Naive thymus-derived CD8-positive, alpha-beta T cell (primary cell): ENCODE measurements at regions of chr7 and their contacts with region 1.

Region 1: DNA sequence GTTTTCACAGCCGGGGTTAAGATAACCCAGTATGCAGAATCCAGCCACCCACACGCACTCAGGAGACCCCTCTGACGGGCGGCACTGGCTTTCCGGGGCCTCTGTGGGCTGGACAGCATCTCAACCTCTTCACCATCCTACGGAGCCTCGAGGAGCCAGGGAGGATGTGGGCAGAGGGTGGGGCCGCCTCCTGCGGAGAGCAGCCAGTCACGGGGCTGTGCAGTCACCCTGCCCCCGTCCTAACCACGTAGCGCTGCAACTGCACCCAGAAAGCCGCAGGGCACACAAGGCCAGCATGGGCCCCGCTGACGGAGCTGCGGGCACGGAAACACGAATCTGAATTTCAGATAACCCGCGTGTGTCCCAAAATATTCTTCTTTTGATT is 270.3 kb downstream of the ELFN1 start:
- DNase-seq: peak; percentile 75 to 99 (median 96)
- ATAC-seq: peak; percentile 87 to 91
- H3K4me3 Mint-ChIP-seq: peak overlapping the region; percentile 84 to 98 (median 94)
- H3K27ac Mint-ChIP-seq: peak overlapping the region; percentile 83 to 100 (median 98)
- H3K4me1 Mint-ChIP-seq: peaks cover 42 to 67% (median 61%) of the 10 kb centered on the region in 4 donors
- H3K27me3 Mint-ChIP-seq: peaks cover 0 to 2% (median 0%) of the 10 kb centered on the region in 5 donors

Region 2: DNA sequence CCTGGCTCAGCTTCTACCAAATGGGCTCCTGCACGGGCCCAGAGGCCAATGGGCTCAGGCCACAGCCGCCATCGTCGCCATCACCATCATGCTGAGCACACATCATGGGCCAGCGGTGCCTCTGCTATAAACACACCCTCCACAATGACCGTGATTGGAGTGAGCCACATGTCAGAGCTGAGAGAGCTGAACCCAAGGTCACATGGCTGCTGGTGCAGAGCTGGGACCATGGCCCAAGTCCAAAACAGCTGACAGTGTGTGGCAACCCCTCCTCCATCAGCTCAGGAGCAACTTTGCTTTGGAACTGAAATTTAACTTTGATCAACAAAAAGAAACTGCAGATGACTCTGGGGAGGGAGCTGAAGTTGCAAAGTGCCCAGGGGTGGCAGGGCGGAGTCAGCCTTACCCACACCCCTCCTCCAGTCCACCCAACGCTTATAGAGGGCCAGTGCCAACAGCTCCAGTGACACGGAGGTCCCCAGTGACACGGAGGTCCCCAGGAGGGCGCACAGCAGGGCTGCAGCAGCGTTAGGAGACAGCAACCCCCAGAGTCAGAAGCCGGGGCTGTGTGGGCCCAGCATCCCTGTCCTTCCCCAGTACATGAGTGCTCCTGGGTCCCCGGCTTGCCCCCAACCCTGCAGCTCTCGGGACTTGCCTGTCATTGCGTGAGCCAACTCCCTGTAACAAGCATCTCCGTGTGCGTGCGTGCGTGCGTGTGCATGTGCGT is 20.7 kb before region 1 on chr7:
- POLR2A ChIA-PET with region 1: interaction called, 32 read pairs
- DNase-seq: peak in 2 of 10 donors; percentile 17 to 29
- ATAC-seq: peak; percentile 31 to 38
- H3K4me3 Mint-ChIP-seq: peak overlapping the region; percentile 83 to 93 (median 88)
- H3K27ac Mint-ChIP-seq: peak overlapping the region; percentile 79 to 97 (median 92)
- H3K4me1 Mint-ChIP-seq: peaks cover 40 to 84% (median 67%) of the 10 kb centered on the region in 4 donors
- H3K27me3 Mint-ChIP-seq: no peaks in the 10 kb centered on the region

Region 3: GRCh38 chr7:1925349-1925748 is 15.0 kb before region 1 on chr7:
- POLR2A ChIA-PET with region 1: interaction called, 32 read pairs
- DNase-seq: peak in 1 of 10 donors; percentile 37
- ATAC-seq: no peak
- H3K4me3 Mint-ChIP-seq: peak overlapping the region; percentile 20 to 78 (median 71)
- H3K27ac Mint-ChIP-seq: peak overlapping the region; percentile 72 to 97 (median 92)
- H3K4me1 Mint-ChIP-seq: peaks cover 50 to 86% (median 77%) of the 10 kb centered on the region in 4 donors
- H3K27me3 Mint-ChIP-seq: no peaks in the 10 kb centered on the region

Region 4: GRCh38 chr7:1951159-1951536 is 10.8 kb after region 1 on chr7:
- POLR2A ChIA-PET with region 1: interaction called, 11 read pairs
- DNase-seq: no peak
- ATAC-seq: peak; percentile 39 to 82
- H3K4me3 Mint-ChIP-seq: peak overlapping the region in 2 of 10 donors; percentile 4 to 63
- H3K27ac Mint-ChIP-seq: peak overlapping the region in 7 of 10 donors; percentile 21 to 88 (median 47)
- H3K4me1 Mint-ChIP-seq: peaks cover 6 to 24% (median 17%) of the 10 kb centered on the region in 4 donors
- H3K27me3 Mint-ChIP-seq: no peaks in the 10 kb centered on the region

Region 5: DNA sequence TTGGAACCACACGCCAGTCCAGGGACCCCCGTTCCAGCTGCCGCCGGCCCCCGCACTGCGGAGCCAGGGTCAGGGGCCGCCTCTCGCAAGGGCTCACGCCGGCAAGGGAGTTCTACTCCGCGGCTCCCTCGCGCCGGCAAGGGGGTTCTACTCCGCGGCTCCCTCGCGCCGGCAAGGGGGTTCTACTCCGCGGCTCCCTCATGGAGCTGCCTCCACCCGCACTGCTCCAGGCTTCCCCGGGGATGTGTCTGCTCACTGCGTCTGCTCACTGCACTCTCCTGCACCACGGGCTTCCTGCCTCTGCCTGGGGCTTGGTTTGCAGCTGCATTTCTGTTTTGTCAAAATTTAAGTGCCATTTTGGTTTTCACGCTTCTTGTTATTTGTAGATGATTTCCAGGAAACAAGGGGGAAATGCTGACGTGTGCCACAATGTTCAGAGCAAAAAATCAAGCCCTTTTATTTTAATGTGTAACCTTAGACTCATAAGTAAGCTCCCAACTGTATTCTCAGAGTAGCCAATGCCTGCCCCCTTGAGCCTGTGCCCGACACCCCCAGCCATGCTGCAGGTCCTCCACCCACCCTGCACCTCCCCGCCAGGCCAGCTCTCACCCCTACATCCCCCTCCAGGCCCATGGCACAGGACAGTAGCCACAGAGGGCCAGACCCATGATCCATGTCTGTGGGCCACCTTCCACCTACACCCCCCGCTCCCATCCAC is 46.1 kb after region 1 on chr7:
- POLR2A ChIA-PET with region 1: interaction called, 18 read pairs
- DNase-seq: peak in 8 of 10 donors; percentile 8 to 81 (median 45)
- ATAC-seq: peak; percentile 75 to 86
- H3K4me3 Mint-ChIP-seq: peak overlapping the region; percentile 47 to 83 (median 68)
- H3K27ac Mint-ChIP-seq: peak overlapping the region; percentile 82 to 98 (median 97)
- H3K4me1 Mint-ChIP-seq: peaks cover 23 to 40% (median 34%) of the 10 kb centered on the region in 4 donors
- H3K27me3 Mint-ChIP-seq: no peaks in the 10 kb centered on the region

Region 6: DNA sequence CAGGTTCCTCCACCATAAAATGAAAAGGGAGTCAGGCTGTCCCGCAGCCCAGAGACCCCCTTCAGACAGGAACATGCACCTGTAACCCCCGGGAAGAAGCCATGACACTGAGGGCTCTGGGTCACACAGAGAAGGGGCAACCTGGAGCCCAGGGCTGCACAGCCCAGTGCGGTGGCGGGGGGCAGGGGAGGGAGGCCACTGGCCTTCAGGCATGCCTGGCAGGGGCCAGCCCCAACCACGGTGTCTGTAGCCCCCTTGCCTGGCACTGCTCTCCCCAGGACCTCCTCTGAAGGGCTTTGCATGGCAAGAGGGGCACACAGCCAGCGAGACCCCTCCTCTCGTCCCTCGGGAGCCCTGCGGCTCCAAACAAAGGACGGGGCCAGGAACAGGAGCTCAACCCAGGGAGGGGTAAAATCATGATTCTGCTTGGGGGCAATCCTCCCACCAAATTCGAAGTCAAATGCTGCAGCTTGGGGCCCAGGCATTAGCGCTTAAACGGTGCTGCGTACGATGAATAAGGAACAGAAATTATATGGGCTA is 57.2 kb after region 1 on chr7:
- POLR2A ChIA-PET with region 1: no interaction called
- DNase-seq: no peak
- ATAC-seq: no peak
- H3K4me3 Mint-ChIP-seq: no peak overlapping the region
- H3K27ac Mint-ChIP-seq: no peak overlapping the region
- H3K4me1 Mint-ChIP-seq: peaks cover 7 to 18% (median 11%) of the 10 kb centered on the region in 4 donors
- H3K27me3 Mint-ChIP-seq: no peaks in the 10 kb centered on the region

Region 7: GRCh38 chr7:2072042-2072441 is 131.6 kb after region 1 on chr7:
- POLR2A ChIA-PET with region 1: no interaction called
- DNase-seq: peak in 2 of 10 donors; percentile 18 to 37
- ATAC-seq: peak; percentile 84 to 93
- H3K4me3 Mint-ChIP-seq: peak overlapping the region in 7 of 10 donors; percentile 24 to 69 (median 54)
- H3K27ac Mint-ChIP-seq: peak overlapping the region in 8 of 10 donors; percentile 62 to 89 (median 84)
- H3K4me1 Mint-ChIP-seq: peaks cover 7 to 34% (median 27%) of the 10 kb centered on the region in 4 donors
- H3K27me3 Mint-ChIP-seq: peaks cover 0 to 1% (median 0%) of the 10 kb centered on the region in 5 donors